IMR-90 (cell line): ENCODE measurements at regions of chr1 and their contacts with region 1.

Region 1: GRCh38 chr1:66533804-66534740 is at the start of gene SGIP1:
- DNase-seq: peak; percentile 88
- ATAC-seq: peak; percentile 70
- H3K4me3 ChIP-seq: peak within 1 kb of the TSS; percentile 80
- H3K27ac ChIP-seq: peak within 1 kb of the TSS; percentile 94
- H3K4me1 ChIP-seq: peaks cover 7% of the 10 kb centered on the region
- H3K27me3 ChIP-seq: no peaks in the 10 kb centered on the region
- CTCF ChIP-seq: no peak
- POLR2A ChIP-seq: peak; percentile 86; the same call in 1 of the 2 replicates
- RAD21 ChIP-seq: no peak
- total RNA-seq, gene SGIP1: 27.1 and 43.6 TPM in 2 replicates

Region 2: GRCh38 chr1:66464802-66465201 is 69.3 kb before region 1 on chr1:
- CTCF ChIA-PET with region 1: interaction called, 5 read pairs
- POLR2A ChIA-PET with region 1: interaction called, 8 read pairs
- dilution Hi-C with region 1: no loop called
- in situ Hi-C with region 1: no loop called
- intact Hi-C with region 1: loop called (anchors 5 kb)
- DNase-seq: peak; percentile 99
- ATAC-seq: peak; percentile 94
- H3K4me3 ChIP-seq: no peak overlapping the region
- H3K27ac ChIP-seq: peak overlapping the region; percentile 99
- H3K4me1 ChIP-seq: peaks cover 11% of the 10 kb centered on the region
- H3K27me3 ChIP-seq: no peaks in the 10 kb centered on the region
- CTCF ChIP-seq: no peak
- POLR2A ChIP-seq: no peak
- RAD21 ChIP-seq: no peak

Region 3: DNA sequence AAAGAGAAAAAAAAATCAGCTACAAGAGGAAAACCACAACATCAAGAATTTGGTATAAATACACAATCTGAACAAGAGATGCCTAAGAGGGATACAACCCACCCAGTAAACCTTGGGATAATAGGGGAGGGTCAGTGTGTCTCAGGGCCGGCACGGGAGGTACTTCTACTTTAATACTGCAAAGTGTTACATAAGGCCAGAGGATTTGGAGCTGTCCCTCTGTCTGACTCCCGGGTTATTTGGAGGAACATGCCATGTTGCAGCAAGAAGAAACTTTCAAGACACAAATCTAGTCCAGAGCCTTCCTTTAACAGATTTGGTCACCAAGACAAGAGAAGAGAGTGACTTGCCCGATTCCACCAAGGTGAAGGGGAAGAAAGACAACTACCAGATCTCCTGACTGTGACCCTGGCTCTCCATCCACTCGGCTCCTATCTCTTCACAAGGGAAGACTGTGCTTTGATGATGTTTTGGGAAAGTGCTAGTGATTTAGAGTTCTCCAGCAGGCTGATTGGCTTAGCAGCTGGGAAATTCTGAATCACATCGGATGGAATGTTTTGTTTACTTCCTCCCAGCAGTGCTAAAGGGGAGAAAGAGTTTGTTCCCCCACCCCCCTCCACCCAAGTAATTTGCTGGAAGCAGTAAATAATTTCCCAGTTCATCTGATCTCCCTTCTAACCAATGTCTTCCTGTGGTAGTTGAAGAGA is 29.2 kb after region 1 on chr1:
- CTCF ChIA-PET with region 1: no interaction called
- POLR2A ChIA-PET with region 1: no interaction called
- dilution Hi-C with region 1: no loop called
- in situ Hi-C with region 1: no loop called
- intact Hi-C with region 1: loop called (anchors 2 kb)
- DNase-seq: peak; percentile 95
- ATAC-seq: peak; percentile 72
- H3K4me3 ChIP-seq: peak overlapping the region; percentile 21; the same call in 1 of the 2 replicates
- H3K27ac ChIP-seq: peak overlapping the region; percentile 88
- H3K4me1 ChIP-seq: peaks cover 19% of the 10 kb centered on the region
- H3K27me3 ChIP-seq: no peaks in the 10 kb centered on the region
- CTCF ChIP-seq: no peak
- POLR2A ChIP-seq: peak; percentile 91
- RAD21 ChIP-seq: 0 out of 2 replicates have a peak, but pooled peaks have one; percentile 6

Region 4: DNA sequence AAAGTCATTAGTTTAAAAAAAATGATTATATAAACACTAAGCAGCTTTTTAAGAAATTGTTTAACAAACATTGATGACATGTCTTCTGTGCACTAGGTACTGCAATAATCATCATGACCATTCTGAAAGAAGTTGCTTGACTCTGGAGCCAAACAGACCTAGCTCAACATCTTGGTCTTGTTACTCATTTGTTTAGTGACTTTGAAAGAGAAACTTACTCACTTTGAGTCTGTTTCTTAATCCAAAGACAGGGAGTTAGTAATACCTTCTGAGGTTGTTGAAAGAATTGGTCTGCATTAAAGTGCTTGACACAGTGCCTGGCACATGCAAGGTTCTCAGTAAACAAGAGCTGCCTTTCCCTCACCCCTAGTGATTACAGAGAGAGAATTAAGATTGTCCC is 84.3 kb after region 1 on chr1:
- CTCF ChIA-PET with region 1: no interaction called
- POLR2A ChIA-PET with region 1: no interaction called
- dilution Hi-C with region 1: no loop called
- in situ Hi-C with region 1: no loop called
- intact Hi-C with region 1: loop called (anchors 5 kb)
- DNase-seq: peak; percentile 85
- ATAC-seq: peak; percentile 88
- H3K4me3 ChIP-seq: no peak overlapping the region
- H3K27ac ChIP-seq: peak overlapping the region; percentile 76; the same call in 1 of the 2 replicates
- H3K4me1 ChIP-seq: peaks cover 10% of the 10 kb centered on the region
- H3K27me3 ChIP-seq: no peaks in the 10 kb centered on the region
- CTCF ChIP-seq: no peak
- POLR2A ChIP-seq: no peak
- RAD21 ChIP-seq: no peak

Region 5: GRCh38 chr1:66924756-66925557 is 390.9 kb after region 1 on chr1 and contains the starts of genes DNAI4 and MIER1:
- CTCF ChIA-PET with region 1: no interaction called
- POLR2A ChIA-PET with region 1: no interaction called
- dilution Hi-C with region 1: no loop called
- in situ Hi-C with region 1: loop called (anchors 25 kb)
- intact Hi-C with region 1: no loop called
- DNase-seq: peak; percentile 98
- ATAC-seq: peak; percentile 96
- H3K4me3 ChIP-seq: peak within 1 kb of the TSS; percentile 64
- H3K27ac ChIP-seq: peak within 1 kb of the TSS; percentile 92
- H3K4me1 ChIP-seq: no peaks in the 10 kb centered on the region
- H3K27me3 ChIP-seq: no peaks in the 10 kb centered on the region
- CTCF ChIP-seq: peak; percentile 5; the same call in 1 of the 2 replicates
- POLR2A ChIP-seq: peak; percentile 63
- RAD21 ChIP-seq: no peak
- total RNA-seq, gene DNAI4: 1.6 and 1.7 TPM in 2 replicates
- total RNA-seq, gene MIER1: 11.5 and 32.2 TPM in 2 replicates